T-cell (primary cell): ENCODE measurements at regions of chr12 and their contacts with region 1.

Region 1: DNA sequence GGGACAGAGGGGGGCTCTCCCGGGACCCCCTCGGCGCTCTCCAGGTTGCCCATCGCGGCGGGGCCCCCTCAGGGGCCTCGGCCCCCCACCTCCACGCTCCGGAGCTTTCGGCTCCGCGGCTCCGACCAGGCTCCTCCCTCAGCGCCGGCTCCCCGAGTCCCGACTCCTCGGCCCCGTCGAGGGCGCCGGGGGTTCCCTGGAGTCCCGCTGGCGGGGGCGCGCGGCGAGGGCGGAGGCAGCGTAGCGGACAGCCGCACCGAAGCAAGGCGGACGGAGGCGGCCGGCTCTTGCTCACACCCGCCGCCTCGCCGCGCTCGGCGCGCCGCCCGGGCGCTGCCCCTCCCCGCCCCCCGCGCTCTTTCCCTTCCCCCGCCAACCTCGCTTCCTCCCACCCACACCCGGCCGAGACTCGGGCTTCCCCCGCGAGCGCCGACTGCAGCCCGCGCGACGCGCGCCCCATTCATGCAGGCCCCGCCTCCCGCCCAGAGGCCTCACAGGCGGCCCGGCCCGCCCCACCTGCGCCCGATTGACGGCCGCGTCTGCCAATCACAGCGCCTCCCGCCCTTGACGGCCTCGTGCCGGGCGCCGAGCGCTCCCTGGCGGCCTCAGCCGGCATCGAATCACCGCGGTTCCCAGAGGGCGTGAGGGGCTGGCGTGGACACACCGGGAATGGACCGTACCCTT is at the start of gene FMNL3:
- DNase-seq: peak; percentile 96 to 100 (median 98)
- ATAC-seq: peak; percentile 95 to 97 (median 96)
- H3K4me3 ChIP-seq: peak within 1 kb of the TSS; percentile 72 to 81
- H3K4me3 Mint-ChIP-seq: peak within 1 kb of the TSS; percentile 91 to 93 (median 92)
- H3K27ac ChIP-seq: peak within 1 kb of the TSS; percentile 67
- H3K27ac Mint-ChIP-seq: peak within 1 kb of the TSS; percentile 85 to 86
- H3K4me1 ChIP-seq: peaks cover 25 to 43% of the 10 kb centered on the region in 2 experiments
- H3K4me1 Mint-ChIP-seq: peaks cover 43 to 49% (median 48%) of the 10 kb centered on the region in 3 donors
- H3K27me3 ChIP-seq: peaks cover 0 to 7% of the 10 kb centered on the region in 2 experiments
- H3K27me3 Mint-ChIP-seq: peaks cover 4 to 8% of the 10 kb centered on the region in 2 donors
- total RNA-seq, gene FMNL3: 34.2 to 45.5 (median 41.1) TPM

Region 2: DNA sequence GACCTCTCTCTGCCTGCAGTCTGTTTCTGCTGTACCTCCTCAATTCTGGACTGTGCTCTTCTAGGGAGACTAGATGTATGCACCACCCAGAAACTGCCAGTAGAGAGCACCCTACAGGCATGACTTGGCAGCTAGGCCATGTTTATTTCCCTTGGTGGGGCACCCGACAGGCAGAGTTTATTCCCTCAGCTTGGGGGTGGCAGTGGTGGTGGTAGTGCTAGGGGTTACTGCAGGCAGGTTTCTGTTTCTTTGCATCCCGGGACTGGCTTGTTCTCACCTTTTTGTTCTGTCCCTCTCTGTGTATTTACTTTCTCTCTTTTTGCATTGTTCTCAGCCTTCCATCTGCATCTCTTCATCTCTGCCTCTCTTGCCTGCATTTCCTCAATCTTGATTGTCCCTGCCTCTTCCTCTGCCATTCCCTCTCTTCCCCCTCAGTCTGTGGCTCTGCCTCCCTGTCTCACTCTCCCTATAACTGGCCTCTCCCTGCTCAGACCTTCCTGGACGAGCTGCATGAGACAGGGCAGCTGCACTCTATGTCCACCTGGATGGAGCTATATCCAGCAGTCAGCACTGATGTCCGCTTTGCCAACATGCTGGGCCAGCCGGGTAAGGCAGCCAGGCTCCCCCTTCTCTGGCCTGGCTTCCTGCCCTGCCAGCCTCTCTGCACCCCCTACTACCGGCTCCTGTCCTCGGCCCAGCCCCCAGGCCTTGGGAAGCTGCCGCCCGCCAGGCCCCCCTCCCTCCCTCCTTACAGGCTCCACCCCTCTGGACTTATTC is 70.1 kb before region 1 on chr12:
- CTCF ChIA-PET with region 1: interaction called, 6 to 24 read pairs
- POLR2A ChIA-PET with region 1: interaction called in 1 of 2 experiments, 10 read pairs
- DNase-seq: peak; percentile 27 to 73 (median 52)
- ATAC-seq: peak; percentile 91 to 98 (median 92)
- H3K4me3 ChIP-seq: no peak overlapping the region
- H3K4me3 Mint-ChIP-seq: no peak overlapping the region
- H3K27ac ChIP-seq: no peak overlapping the region
- H3K27ac Mint-ChIP-seq: peak overlapping the region; percentile 29 to 59
- H3K4me1 ChIP-seq: peaks cover 4 to 19% of the 10 kb centered on the region in 2 experiments
- H3K4me1 Mint-ChIP-seq: peaks cover 18 to 27% (median 19%) of the 10 kb centered on the region in 3 donors
- H3K27me3 ChIP-seq: no peaks in the 10 kb centered on the region
- H3K27me3 Mint-ChIP-seq: no peaks in the 10 kb centered on the region

Region 3: GRCh38 chr12:49750027-49750995 is 43.0 kb after region 1 on chr12:
- CTCF ChIA-PET with region 1: interaction called in 1 of 2 experiments, 3 read pairs
- POLR2A ChIA-PET with region 1: interaction called in 1 of 2 experiments, 11 read pairs
- DNase-seq: peak in 10 of 35 experiments; percentile 2 to 45 (median 14)
- ATAC-seq: peak; percentile 63 to 84 (median 72)
- H3K4me3 ChIP-seq: no peak overlapping the region
- H3K4me3 Mint-ChIP-seq: peak overlapping the region; percentile 43 to 67 (median 43)
- H3K27ac ChIP-seq: peak overlapping the region; percentile 14
- H3K27ac Mint-ChIP-seq: peak overlapping the region; percentile 69 to 79
- H3K4me1 ChIP-seq: peaks cover 39 to 44% of the 10 kb centered on the region in 2 experiments
- H3K4me1 Mint-ChIP-seq: peaks cover 84 to 95% (median 88%) of the 10 kb centered on the region in 3 donors
- H3K27me3 ChIP-seq: no peaks in the 10 kb centered on the region
- H3K27me3 Mint-ChIP-seq: no peaks in the 10 kb centered on the region

Region 4: GRCh38 chr12:49847161-49847560 is 139.9 kb after region 1 on chr12:
- CTCF ChIA-PET with region 1: no interaction called
- POLR2A ChIA-PET with region 1: no interaction called
- DNase-seq: no peak
- ATAC-seq: no peak
- H3K4me3 ChIP-seq: no peak overlapping the region
- H3K4me3 Mint-ChIP-seq: peak overlapping the region in 1 of 3 donors; percentile 11
- H3K27ac ChIP-seq: no peak overlapping the region
- H3K27ac Mint-ChIP-seq: peak overlapping the region; percentile 34 to 44
- H3K4me1 ChIP-seq: peaks cover 6 to 20% of the 10 kb centered on the region in 2 experiments
- H3K4me1 Mint-ChIP-seq: peaks cover 22 to 26% (median 23%) of the 10 kb centered on the region in 3 donors
- H3K27me3 ChIP-seq: peaks cover 0 to 4% of the 10 kb centered on the region in 2 experiments
- H3K27me3 Mint-ChIP-seq: peaks cover 10 to 19% of the 10 kb centered on the region in 2 donors